Gastrocnemius medialis (tissue), 4 donors: ENCODE measurements at regions of chr6 and their contacts with region 1.

Region 1: DNA sequence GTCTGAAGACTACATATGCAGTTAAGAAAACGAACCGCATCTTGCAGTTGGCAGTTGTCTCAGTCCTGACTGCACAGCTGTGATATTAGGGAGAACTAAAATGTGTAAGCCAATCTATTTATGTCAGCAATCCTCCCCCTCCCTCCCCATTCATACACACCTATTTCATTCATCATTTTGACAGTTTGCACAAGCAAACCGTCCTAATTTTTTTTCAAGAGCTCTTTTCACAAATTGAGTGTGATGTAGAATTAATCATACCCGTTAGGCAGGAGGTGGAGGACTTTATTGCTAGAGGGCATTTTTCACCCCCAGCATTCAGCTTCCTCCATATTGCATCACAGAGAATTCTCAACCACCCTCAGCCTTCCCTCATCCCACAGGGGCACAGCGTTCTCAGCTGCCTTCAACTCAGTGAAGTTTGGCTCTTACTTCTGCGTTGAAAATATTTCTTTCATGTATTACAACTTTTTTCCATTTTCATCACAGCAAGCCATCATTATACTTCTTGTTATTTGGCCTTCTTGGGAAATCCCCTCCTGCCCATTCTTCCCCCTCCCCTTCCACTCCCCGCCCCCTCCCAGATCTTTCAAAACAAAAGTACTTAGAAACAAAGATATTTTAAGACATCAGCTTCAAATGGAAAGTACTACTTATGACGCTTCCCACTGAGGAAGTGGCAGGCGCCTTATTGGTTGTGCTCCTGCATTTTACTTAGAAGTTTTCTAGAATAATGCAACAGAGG is 37.5 kb downstream of the NOX3 start:
- DNase-seq: no peak
- ATAC-seq: peak; percentile 26 to 58
- H3K4me3 ChIP-seq: peak overlapping the region in 3 of 4 donors; percentile 3 to 23 (median 17)
- H3K27ac ChIP-seq: no peak overlapping the region
- H3K4me1 ChIP-seq: peaks cover 0 to 5% of the 10 kb centered on the region in 2 donors
- H3K27me3 ChIP-seq: no peaks in the 10 kb centered on the region
- CTCF ChIP-seq: no peak
- POLR2A ChIP-seq: no peak

Region 2: GRCh38 chr6:155327326-155328073 is 90.7 kb before region 1 on chr6:
- in situ Hi-C with region 1: no loop called
- intact Hi-C with region 1: no loop called
- DNase-seq: peak in 1 of 2 donors; percentile 15
- ATAC-seq: peak; percentile 59 to 81
- H3K4me3 ChIP-seq: no peak overlapping the region
- H3K27ac ChIP-seq: no peak overlapping the region
- H3K4me1 ChIP-seq: peaks cover 0 to 3% of the 10 kb centered on the region in 2 donors
- H3K27me3 ChIP-seq: no peaks in the 10 kb centered on the region
- CTCF ChIP-seq: peak; percentile 80 to 86 (median 84)
- POLR2A ChIP-seq: no peak

Region 3: DNA sequence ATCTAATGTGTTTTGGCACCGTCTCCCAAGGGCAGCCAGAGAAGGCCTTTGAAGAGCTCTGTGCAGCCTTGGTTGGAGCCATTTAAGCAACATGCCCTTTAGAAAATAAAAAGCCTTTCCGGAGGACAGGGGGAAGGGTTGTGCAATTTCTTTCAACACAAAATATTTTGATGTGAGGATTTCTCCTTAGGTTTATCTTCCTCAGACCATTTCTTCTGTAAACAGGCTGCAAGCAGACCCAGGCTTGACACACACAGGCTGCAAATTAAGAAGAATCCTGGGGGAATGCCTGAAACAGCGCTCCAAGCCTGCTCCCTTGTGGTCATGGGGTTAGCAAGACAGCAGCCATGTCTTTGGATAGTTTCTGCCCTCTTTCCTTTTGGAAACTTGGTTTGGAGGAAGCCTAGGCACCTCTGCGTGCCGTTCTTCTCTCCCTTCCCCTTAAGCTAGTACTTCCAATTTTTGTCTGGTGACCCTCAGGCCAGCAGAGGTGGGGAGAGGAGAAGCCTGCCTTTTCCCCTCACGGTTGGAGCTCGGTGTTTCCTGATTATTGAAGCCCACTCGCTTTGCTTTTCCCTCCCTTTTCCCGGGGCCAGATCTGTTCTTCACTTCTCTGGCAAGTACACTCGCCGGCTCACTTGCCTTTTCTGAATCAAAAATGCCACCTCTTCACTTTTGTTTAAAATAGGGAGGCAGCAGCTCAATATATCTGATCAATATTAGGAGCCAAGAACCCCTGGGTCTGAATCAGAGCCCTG is 77.0 kb after region 1 on chr6:
- in situ Hi-C with region 1: no loop called
- intact Hi-C with region 1: loop called (anchors 5 kb)
- DNase-seq: peak; percentile 7 to 24
- ATAC-seq: peak; percentile 39 to 43
- H3K4me3 ChIP-seq: no peak overlapping the region
- H3K27ac ChIP-seq: peak overlapping the region in 2 of 4 donors; percentile 28 to 50
- H3K4me1 ChIP-seq: peaks cover 0 to 6% of the 10 kb centered on the region in 2 donors
- H3K27me3 ChIP-seq: no peaks in the 10 kb centered on the region
- CTCF ChIP-seq: peak in 2 of 5 experiments; percentile 10 to 11
- POLR2A ChIP-seq: no peak